Heart left ventricle (tissue), 16 donors: ENCODE measurements at regions of chr14 and their contacts with region 1.

Region 1: DNA sequence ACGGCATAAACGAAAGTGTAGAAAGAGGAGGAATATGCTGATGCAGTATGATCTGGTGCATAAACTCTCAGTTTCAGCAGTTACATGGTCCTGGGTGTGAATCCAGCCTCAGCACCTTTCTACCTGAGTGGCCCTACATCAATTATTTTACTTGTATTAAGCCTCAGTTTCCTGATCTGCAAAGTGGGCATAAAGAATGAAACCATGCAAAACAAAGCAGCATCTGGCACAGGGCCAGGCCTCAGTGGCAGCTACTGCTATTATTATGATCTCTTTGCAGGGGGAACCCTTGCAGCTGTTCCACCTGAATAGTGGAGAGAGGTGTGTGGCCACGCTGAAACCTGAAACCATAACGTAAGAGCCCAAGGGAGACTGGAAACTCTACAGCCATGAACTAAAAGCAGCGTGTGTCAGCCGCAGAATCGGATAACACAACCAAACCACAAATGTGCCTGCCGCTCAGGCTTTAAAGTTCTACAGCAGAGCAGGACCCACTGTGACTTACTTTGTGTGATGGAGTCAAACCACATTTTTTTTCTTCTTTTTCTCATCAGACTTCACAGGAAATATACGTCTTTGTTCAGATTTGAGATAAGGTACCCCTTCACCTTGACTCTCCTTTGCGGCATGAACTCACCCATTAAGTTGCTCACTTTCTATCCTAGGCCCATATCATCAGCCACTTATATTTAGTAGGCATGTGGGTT is 29.2 kb upstream of the FOS start:
- DNase-seq: no peak
- ATAC-seq: peak in 2 of 4 donors; percentile 6 to 23
- H3K4me3 ChIP-seq: no peak overlapping the region
- H3K27ac ChIP-seq: peak overlapping the region in 1 of 12 donors; percentile 44
- H3K4me1 ChIP-seq: peaks cover 0 to 47% (median 5%) of the 10 kb centered on the region in 12 donors
- H3K27me3 ChIP-seq: no peaks in the 10 kb centered on the region
- CTCF ChIP-seq: no peak
- POLR2A ChIP-seq: no peak

Region 2: DNA sequence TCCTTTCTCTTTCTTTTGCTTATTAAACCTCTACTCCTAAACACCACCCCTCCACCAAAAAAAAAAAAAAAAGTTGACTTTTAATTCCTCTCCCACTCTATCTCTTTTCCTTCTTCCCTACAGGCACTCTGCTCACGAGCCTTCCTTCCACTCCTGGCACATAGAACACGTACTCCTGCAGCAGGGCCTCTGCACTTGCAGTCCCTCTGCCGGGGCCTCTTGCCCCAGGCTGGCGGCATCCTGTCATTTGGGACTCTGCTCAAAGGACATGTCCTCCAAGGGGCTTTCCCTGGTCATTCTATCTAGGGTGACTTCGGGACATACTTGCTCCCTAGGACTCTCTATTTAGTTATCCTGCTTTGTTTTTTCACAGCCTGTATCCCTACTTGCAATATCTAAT is 36.9 kb after region 1 on chr14:
- intact Hi-C with region 1: loop called in 3 of 10 experiments (anchors 5 to 10 kb)
- DNase-seq: peak; percentile 46 to 75 (median 61)
- ATAC-seq: peak; percentile 63 to 78 (median 67)
- H3K4me3 ChIP-seq: no peak overlapping the region
- H3K27ac ChIP-seq: peak overlapping the region in 6 of 12 donors; percentile 13 to 49 (median 30)
- H3K4me1 ChIP-seq: peaks cover 0 to 46% (median 7%) of the 10 kb centered on the region in 12 donors
- H3K27me3 ChIP-seq: no peaks in the 10 kb centered on the region
- CTCF ChIP-seq: no peak
- POLR2A ChIP-seq: no peak

Region 3: DNA sequence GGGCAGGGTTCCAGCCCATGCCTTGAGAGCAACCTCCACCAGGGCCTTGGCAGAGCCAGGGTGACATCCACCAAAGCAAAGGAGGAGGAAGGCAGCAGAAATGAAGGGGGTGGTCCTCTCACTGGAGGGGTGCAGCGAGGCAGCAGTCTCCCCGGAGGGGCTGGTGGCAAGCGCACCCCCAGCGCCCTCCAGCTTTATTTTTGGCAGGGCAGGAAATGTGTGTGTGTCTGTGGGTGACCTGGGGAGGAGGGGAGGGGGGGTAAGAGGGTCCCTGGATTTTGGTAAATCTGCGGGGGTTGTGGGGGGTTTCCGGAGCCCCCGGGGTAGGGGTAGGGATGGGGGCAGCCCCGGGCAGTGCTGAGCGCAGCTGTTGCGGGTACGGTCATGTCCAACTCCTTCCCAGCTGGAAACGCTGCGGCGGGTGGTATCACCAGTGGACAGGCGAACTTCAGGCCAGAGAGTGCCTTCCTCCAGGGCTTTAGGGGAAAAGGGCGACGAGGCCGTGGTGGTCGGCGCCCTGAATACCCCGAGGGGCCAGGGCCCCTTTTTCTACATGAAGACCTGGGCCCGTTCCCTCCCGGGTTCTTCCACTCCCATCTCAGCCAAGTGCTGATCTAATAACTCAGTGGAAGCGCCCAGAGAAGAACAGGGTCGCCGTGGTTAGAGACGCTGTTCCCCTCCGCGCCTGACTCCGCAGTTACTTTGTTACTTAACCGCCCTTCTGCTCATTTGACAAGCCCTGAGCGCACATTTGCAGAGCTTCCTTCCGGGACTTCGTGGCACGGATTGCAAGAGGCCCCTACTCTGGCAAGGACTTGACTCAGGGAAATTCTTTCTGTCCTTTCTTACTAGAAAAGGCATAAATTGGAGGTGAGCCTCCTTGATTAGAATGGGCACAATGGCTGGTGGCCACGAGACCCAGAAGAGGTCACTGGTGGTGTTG is 84.5 kb after region 1 on chr14:
- intact Hi-C with region 1: no loop called
- DNase-seq: peak; percentile 37 to 75 (median 70)
- ATAC-seq: peak; percentile 60 to 78 (median 70)
- H3K4me3 ChIP-seq: peak overlapping the region in 4 of 12 donors; percentile 14 to 49 (median 22)
- H3K27ac ChIP-seq: peak overlapping the region in 10 of 12 donors; percentile 17 to 96 (median 46)
- H3K4me1 ChIP-seq: peaks cover 0 to 46% (median 3%) of the 10 kb centered on the region in 12 donors
- H3K27me3 ChIP-seq: no peaks in the 10 kb centered on the region
- CTCF ChIP-seq: no peak
- POLR2A ChIP-seq: no peak

Region 4: GRCh38 chr14:75689012-75689411 is 439.6 kb after region 1 on chr14:
- intact Hi-C with region 1: no loop called
- DNase-seq: peak in 4 of 5 donors; percentile 18 to 45 (median 36)
- ATAC-seq: peak in 3 of 4 donors; percentile 60 to 78 (median 61)
- H3K4me3 ChIP-seq: no peak overlapping the region
- H3K27ac ChIP-seq: no peak overlapping the region
- H3K4me1 ChIP-seq: peaks cover 0 to 3% (median 0%) of the 10 kb centered on the region in 12 donors
- H3K27me3 ChIP-seq: no peaks in the 10 kb centered on the region
- CTCF ChIP-seq: no peak
- POLR2A ChIP-seq: no peak